ENCODE measurements at regions of chr1 and their contacts with region 1.

Region 1: DNA sequence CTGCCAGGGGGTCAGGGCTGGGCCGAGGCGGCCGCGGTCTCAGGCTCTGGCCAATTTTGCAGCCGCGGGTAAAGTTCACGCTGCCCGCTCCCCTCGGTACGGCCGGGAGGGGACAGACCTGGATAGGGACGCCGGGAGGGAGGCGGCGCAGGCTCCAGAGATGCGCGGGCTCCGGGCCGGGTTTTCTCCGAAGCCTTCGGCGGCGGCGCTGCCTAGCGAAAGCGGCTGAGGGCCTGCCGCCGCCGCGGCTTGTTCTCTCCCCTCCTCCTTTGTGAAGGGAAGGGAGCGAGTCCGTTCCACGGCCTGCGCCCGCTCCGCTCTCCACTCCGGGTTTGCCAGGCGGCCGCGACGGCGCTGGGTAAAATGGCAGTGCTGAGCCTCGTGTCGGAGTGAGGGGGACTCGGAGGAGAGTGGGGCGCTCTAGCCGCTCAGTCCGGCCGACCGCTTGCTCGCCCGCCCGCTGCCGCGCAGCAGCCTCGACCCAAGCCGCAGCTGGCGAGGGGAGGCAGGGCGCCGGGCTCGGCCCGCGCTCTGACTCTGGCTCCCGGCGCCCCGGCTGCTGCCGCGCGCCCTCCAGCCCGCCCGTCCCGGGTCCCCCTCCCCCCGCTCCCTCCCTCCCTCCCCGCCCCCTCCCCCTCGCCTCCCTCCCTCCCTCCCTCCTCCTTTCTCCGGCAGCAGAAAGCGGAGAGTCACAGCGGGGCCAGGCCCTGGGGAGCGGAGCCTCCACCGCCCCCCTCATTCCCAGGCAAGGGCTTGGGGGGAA is at the start of gene ARID1A:
- DNase-seq: peak; percentile 98
- ATAC-seq: peak; percentile 75
- total RNA-seq, gene ARID1A: 27.5 TPM

Region 2: DNA sequence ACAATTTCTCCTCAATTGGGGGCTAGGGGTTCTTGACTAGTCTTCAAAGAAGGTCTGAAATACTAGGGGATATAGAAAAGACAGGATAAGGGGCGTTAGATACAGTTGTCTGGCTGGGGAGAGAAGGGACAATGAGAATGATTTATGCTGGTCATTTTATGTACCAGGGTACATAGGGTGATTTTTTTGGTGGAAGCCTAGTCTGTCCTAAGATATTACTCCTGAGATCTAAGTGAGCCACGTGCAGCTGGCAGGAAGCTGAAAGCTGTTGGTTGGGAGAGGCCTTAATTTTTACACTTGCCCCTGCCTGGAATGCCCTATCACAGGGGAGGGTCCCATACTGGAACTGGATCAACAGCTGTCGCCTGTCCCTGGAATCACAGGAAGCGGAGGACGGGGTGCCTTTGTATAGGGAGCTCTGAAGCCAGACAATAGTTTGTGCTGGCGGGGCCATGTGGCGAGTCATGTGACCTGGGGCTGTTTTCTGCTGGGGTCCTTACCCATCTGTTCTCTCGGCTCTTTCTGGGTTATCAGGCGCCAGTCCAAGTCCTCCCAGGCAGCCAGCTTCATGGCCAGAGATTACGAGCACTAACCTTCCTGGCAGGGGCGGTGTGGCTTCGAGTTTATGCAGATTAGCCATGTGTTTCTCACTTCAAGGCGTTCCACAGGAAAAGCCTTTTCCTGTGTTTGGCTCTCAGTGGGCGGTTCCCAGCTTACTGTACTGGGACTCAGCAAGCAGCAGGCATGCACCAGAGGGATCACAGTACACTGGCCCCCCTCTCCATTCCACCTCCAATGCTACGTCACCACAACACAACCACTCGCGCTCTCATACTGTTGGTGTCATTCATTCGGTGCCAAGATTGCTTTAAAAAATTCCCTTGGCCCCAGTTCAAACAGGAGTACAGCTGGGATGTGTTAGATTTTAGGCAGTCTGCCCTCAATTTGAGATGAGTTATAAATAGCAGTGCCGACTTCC is 27.8 kb after region 1 on chr1:
- intact Hi-C with region 1: loop called (anchors 1 kb)
- DNase-seq: peak; percentile 86
- ATAC-seq: peak; percentile 98

Region 3: DNA sequence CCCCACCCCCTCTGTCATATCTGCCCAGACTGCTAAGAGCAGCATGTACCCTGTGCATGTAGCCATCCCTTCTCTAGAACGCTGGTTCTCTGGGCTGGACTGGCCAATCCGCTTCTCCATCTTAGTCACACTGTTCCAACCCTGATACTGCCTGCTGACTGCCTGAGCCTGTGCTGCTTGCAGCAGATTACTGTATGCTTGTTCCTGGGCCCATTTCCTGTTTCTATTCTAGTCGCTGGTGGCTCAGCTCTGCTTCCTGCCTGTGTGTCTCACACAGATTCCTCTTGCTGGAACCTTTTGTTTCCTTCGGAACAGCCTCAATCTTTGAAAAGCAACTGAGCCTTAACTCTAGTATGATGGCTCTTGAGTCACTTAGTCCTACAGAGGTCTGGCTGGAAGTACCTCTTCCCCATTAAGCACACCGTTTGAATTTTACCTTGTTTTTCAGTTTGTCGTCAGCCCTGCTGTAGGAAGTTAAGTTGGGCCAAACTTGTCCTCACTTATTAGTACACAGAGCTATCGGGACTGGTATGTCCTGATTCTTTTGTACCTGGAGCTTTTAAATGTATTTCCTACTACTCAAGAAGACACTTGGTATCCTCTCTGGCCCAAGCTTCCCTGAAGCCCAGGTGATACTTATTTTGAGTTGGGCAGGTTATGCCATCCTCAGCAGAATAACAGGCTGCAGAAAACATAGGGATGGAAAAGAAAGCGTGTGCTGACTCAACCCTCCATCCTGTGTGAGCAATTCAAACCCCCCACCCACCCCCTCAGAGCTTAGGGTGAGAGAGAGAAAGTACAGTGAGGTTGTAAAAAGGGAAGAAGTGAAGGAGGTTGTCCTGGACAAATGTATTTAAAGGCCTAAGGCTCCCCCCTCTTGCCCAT is 48.8 kb after region 1 on chr1:
- intact Hi-C with region 1: loop called (anchors 5 kb)
- DNase-seq: peak; percentile 88
- ATAC-seq: peak; percentile 98

Measured in Right ventricle myocardium inferior (tissue), 1 donor.